Sciatic nerve (tissue), 2 donors: ENCODE measurements at regions of chr4 and their contacts with region 1.

Region 1: GRCh38 chr4:26717332-26717731 is 133.4 kb downstream of the TBC1D19 start:
- DNase-seq: no peak
- ATAC-seq: no peak

Region 2: GRCh38 chr4:26746802-26747213 is 29.5 kb after region 1 on chr4:
- intact Hi-C with region 1: loop called (anchors 1 kb)
- DNase-seq: no peak
- ATAC-seq: no peak

Region 3: GRCh38 chr4:28001698-28002097 is 1284.4 kb after region 1 on chr4:
- intact Hi-C with region 1: no loop called
- DNase-seq: no peak
- ATAC-seq: no peak